Posterior vena cava (tissue), 2 donors: ENCODE measurements at regions of chr18 and their contacts with region 1.

Region 1: DNA sequence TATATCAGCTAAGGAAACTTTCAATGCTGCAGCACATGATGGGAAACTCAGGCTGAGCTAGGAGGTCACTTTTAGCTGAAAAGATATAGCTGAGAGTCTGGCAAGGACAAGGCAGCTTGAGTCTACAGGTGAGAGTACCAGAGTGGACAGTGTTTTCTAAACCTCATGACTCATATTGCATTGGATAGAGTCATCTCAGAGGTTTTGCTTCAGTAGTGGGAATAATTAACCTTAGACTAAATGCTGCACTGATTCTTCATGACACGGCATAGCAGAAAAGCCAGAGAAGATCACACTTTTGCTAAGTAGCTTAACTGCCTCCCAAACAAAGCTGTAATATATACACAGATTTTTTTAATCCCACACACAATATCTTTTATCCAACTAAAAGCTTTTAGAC is 865.0 kb upstream of the CDH2 start:
- DNase-seq: no peak

Region 2: DNA sequence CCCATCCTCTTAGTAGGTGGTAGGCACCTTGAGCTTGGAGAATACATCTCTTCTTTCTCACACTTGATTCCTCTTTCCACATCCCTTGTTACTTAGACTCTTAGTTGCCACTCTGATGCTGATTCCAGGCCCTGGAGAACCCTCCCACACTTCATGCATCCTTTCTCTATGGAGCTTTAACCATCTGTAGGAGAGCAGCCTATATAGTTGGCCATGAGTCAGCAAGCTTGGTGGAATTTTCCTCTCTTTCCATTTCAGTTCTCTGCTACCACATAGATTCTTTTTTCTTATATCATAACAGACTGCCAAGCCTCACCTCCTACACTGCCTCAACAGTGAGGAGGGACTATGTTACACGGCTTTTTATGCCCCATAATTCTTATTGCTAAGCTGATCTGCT is 13.4 kb before region 1 on chr18:
- intact Hi-C with region 1: loop called in 1 of 2 experiments (anchors 2 kb)
- DNase-seq: no peak